A549 (cell line): ENCODE measurements at regions of chr9 and their contacts with region 1.

Region 1: DNA sequence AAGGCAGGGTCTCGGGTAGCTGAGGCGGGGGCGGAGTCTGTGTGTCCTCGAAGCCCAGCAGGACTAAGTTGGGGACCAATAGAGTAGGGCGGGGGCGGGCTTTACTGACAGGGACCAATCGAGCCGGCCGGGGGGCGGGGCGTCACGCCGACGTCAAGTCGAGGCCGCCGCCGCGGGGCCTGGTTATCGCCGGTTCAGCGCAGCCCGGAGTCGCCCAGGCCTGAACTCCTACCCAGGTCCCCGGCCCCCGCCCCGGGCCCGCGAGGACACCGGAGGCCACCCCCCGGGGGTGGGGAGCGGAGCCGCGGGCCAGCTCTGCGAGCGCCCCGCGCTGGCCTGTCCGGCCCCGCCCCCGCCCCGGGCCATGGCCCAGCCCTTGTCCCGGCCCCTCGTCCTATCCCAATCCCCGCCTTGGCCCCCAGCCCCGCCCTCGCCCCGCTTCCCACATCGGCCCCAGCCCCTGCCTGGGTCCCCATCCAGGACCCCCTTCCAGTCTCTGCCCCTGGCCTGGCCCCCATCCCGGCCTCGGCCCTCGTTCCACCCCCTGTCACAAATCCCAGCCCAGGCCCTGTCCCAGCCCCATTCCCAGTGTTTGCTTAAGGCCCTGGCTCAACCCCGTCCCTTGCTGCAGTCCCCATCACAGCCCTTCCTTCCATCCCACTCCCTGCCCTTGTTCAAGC is at the start of gene TMEM8B:
- DNase-seq: peak; percentile 90 to 97
- ATAC-seq: peak; percentile 86 to 93
- H3K4me3 ChIP-seq: peak within 1 kb of the TSS; percentile 80
- H3K27ac ChIP-seq: peak within 1 kb of the TSS; percentile 84 to 91
- H3K4me1 ChIP-seq: peaks cover 4% of the 10 kb centered on the region; the same call in 2 of the 3 replicates
- CTCF ChIP-seq: no peak
- EP300 ChIP-seq: no peak
- POLR2A ChIP-seq: no peak
- RAD21 ChIP-seq: no peak
- polyA plus RNA-seq, gene TMEM8B: 1.8 and 2.0 TPM in 2 replicates

Region 2: DNA sequence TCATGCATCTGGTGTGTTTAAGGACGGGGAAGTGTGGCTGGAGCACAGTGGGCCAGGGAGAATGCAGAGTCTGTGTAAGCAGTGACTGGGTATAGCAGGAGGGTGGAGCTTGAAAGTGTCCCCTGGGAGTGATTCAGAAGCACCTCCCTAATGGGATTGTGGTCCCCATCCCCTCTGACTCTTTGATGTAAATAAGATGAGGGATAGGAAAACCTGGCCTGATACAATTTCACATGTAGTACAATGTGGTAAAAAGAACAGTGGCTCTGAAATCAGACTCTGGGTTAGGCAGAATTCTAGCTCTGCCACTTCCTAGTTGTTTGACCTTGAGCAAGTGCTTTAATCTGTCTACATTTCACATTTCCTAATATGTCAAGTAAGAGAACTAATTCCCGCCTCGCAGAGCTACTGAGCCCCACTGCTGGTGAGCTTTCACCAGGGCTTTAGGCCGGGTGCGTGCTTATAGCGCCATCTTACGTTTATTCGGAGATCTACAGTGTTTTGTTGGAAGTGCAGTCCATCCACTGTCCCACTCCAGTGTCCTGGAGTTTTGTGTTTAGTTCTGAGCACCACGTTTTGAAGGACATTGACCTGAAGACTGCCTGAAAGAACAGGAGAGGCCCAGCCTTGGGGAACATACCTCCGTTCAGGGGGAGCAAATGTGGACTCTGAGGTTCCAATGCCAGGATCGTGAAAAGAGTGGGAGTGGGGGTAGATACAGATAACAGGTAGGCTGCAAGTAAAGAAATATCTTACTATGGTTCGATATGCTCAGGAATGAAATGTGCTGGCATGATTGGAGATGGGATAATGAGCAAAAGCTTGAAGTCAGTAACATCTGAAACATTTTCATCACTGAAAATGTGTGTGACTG is 275.3 kb before region 1 on chr9:
- CTCF ChIA-PET with region 1: no interaction called
- POLR2A ChIA-PET with region 1: no interaction called
- DNase-seq: peak; percentile 69 to 85
- ATAC-seq: peak; percentile 84 to 89
- H3K4me3 ChIP-seq: no peak overlapping the region; the same call in 2 of the 3 replicates
- H3K27ac ChIP-seq: peak overlapping the region; percentile 83 to 87
- H3K4me1 ChIP-seq: peaks cover 44% of the 10 kb centered on the region
- CTCF ChIP-seq: peak; percentile 98
- EP300 ChIP-seq: no peak
- POLR2A ChIP-seq: no peak
- RAD21 ChIP-seq: peak; percentile 98 to 99

Region 3: DNA sequence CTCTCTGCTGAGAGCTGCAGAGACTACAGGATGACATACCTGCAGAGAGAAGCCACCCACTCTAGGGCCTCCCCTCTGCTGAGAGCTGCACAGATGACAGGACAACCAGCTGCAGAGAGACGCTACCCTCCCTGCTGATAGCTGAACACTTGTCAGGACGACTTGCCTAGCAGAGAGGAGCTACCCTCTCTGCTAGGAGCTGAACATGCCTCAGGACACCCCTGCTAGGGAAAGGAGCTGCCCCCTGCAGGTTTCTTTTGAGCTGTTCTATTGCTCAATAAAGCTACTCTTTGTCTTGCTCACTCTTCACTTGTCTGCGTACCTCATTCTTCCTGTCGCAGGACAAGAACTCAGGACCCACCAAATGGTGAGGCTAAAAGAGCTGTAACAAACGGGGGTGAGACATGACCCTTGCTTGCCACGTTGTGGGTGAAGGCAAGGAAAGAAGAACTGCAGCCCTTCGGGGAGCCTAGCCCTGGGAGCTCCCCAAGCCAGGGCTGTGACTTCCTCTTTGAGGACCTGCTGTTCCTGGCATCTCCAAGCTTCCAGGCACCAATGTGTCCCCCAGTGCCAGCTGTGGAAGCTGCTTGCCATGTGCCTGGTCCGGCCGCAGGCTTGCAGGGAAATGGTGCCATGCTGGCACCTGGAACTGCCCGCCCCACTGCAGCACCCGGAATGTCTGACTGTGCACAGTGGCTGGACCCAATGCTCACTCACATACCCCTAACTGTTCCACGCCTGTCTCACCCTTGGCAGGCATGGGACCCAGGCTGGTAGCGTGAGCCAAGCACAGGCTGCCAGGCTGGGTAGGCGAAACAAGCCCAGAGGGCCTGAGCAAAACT is 229.2 kb before region 1 on chr9:
- CTCF ChIA-PET with region 1: no interaction called
- POLR2A ChIA-PET with region 1: no interaction called
- DNase-seq: peak in 1 of 2 experiments; percentile 24
- ATAC-seq: no peak
- H3K4me3 ChIP-seq: no peak overlapping the region
- H3K27ac ChIP-seq: no peak overlapping the region; a peak in 1 of 6 replicates
- H3K4me1 ChIP-seq: no peaks in the 10 kb centered on the region
- CTCF ChIP-seq: no peak
- EP300 ChIP-seq: no peak
- POLR2A ChIP-seq: no peak
- RAD21 ChIP-seq: no peak; a peak in 1 of 5 replicates

Region 4: DNA sequence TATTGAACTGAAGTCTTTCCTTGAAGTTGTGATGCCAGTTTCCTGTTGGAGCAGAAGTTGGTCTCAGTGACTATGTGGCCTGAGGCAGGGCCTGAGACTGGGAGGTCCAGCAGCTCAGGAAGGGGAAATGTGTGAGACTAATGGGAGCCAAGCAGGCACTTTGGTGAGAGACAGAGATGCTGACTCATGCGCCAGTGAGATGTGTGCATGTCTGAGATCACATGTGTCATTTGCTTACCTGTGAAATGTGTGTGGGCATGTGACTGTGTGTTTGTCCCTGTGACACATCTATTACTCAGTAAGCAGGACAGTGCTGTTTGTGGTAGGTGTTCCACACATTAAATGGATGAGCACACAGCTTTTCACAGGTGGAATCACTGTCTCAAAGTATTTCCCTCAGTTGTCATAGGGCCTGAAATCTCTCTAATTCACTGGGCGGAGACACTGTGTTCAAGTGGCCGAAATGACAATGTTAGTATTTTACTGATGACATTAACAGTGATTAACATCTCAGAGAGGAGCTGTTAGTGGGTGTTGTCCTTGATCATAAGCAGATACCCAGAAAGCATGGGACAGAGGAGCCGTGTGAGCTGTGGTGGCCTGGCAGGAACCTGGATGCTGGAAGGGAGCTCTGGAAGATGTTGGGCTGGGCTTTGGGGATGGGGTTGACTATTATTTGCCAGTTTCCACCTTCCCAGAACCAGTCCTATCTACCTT is 30.4 kb before region 1 on chr9:
- CTCF ChIA-PET with region 1: interaction called, 13 read pairs
- POLR2A ChIA-PET with region 1: no interaction called
- DNase-seq: peak in 1 of 2 experiments; percentile 54
- ATAC-seq: peak; percentile 46 to 63; a peak in 5 of 6 replicates
- H3K4me3 ChIP-seq: no peak overlapping the region
- H3K27ac ChIP-seq: peak overlapping the region; percentile 8 to 18; a peak in 3 of 6 replicates
- H3K4me1 ChIP-seq: peaks cover 33% of the 10 kb centered on the region
- CTCF ChIP-seq: no peak
- EP300 ChIP-seq: no peak
- POLR2A ChIP-seq: no peak
- RAD21 ChIP-seq: no peak

Region 5: GRCh38 chr9:35805551-35805950 is 23.7 kb before region 1 on chr9:
- CTCF ChIA-PET with region 1: interaction called, 51 read pairs
- POLR2A ChIA-PET with region 1: no interaction called
- DNase-seq: no peak
- ATAC-seq: no peak
- H3K4me3 ChIP-seq: no peak overlapping the region
- H3K27ac ChIP-seq: no peak overlapping the region
- H3K4me1 ChIP-seq: no peaks in the 10 kb centered on the region
- CTCF ChIP-seq: no peak
- EP300 ChIP-seq: no peak
- POLR2A ChIP-seq: no peak
- RAD21 ChIP-seq: no peak

Region 6: GRCh38 chr9:35814841-35815543 is 14.2 kb before region 1 on chr9 and contains the start of gene HINT2:
- CTCF ChIA-PET with region 1: interaction called, 51 read pairs
- POLR2A ChIA-PET with region 1: interaction called, 4 read pairs
- DNase-seq: peak; percentile 98
- ATAC-seq: peak; percentile 86 to 92
- H3K4me3 ChIP-seq: peak within 1 kb of the TSS; percentile 73
- H3K27ac ChIP-seq: peak within 1 kb of the TSS; percentile 94 to 96
- H3K4me1 ChIP-seq: peaks cover 21% of the 10 kb centered on the region
- CTCF ChIP-seq: no peak
- EP300 ChIP-seq: no peak
- POLR2A ChIP-seq: peak; percentile 88
- RAD21 ChIP-seq: 0 out of 5 replicates have a peak, but pooled peaks of 1 of the 2 experiments have one; percentile 2
- polyA plus RNA-seq, gene HINT2: 46.9 and 47.3 TPM in 2 replicates

Region 7: GRCh38 chr9:35844716-35845270 is 15.6 kb after region 1 on chr9:
- CTCF ChIA-PET with region 1: interaction called, 59 read pairs
- POLR2A ChIA-PET with region 1: no interaction called
- DNase-seq: peak in 1 of 2 experiments; percentile 56
- ATAC-seq: peak in 1 of 2 experiments; percentile 55; a peak in 3 of 6 replicates
- H3K4me3 ChIP-seq: no peak overlapping the region
- H3K27ac ChIP-seq: no peak overlapping the region
- H3K4me1 ChIP-seq: peaks cover 13% of the 10 kb centered on the region
- CTCF ChIP-seq: no peak
- EP300 ChIP-seq: no peak
- POLR2A ChIP-seq: no peak
- RAD21 ChIP-seq: no peak